Right cardiac atrium (tissue), 5 donors: ENCODE measurements at regions of chr1 and their contacts with region 1.

Region 1: GRCh38 chr1:16009030-16009709 is 5.1 kb downstream of the SRARP start:
- DNase-seq: peak; percentile 78 to 92 (median 89)
- ATAC-seq: peak; percentile 15 to 25
- H3K4me3 ChIP-seq: no peak overlapping the region
- H3K27ac ChIP-seq: no peak overlapping the region
- H3K4me1 ChIP-seq: peaks cover 2% of the 10 kb centered on the region
- H3K27me3 ChIP-seq: no peaks in the 10 kb centered on the region

Region 2: GRCh38 chr1:15935056-15935950 is 73.9 kb before region 1 on chr1:
- intact Hi-C with region 1: no loop called
- DNase-seq: no peak
- ATAC-seq: no peak
- H3K4me3 ChIP-seq: no peak overlapping the region
- H3K27ac ChIP-seq: no peak overlapping the region
- H3K4me1 ChIP-seq: no peaks in the 10 kb centered on the region
- H3K27me3 ChIP-seq: no peaks in the 10 kb centered on the region

Region 3: DNA sequence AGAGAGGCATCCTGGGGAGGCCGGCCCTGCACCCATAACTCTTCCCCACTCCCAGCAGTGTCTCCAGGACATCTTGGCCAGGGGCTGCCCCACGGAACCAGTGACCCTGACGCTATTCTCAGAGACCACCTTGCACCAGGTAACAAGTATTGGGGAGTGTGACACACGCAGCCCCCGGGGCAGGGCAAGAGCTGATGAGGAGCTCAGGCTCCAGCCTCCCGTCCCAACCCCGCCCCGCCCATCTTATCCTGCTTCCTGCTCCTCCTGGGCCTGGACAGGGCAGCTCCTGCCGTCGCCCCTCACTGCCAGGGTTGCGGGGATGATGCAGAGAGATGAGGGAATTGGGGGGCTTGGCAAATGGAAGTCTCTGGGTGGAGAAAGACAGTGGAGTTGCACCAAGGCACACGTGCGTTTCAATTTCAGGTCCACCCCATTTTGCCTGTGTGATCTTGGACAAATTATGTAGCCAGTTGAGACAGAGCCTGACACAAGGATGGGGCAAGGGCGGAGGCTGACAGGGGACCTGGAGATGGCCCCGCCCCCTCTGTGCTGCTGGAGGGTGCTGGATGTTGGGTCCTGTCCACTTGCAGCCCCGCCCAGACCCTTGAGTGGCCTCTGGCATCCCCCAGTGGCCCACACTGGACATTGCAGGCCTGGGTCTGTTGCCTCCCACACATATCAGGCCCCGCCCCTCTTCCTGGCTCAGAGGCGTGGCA is 23.4 kb after region 1 on chr1:
- intact Hi-C with region 1: loop called in 1 of 4 experiments (anchors 1 kb)
- DNase-seq: peak; percentile 89 to 96 (median 95)
- ATAC-seq: peak; percentile 90 to 91
- H3K4me3 ChIP-seq: no peak overlapping the region
- H3K27ac ChIP-seq: no peak overlapping the region
- H3K4me1 ChIP-seq: no peaks in the 10 kb centered on the region
- H3K27me3 ChIP-seq: no peaks in the 10 kb centered on the region

Region 4: GRCh38 chr1:16055613-16056520 is 46.7 kb after region 1 on chr1:
- intact Hi-C with region 1: loop called (anchors 2 to 5 kb)
- DNase-seq: peak; percentile 84 to 94 (median 91)
- ATAC-seq: peak; percentile 62 to 78
- H3K4me3 ChIP-seq: no peak overlapping the region
- H3K27ac ChIP-seq: no peak overlapping the region
- H3K4me1 ChIP-seq: no peaks in the 10 kb centered on the region
- H3K27me3 ChIP-seq: no peaks in the 10 kb centered on the region